Activated CD8-positive, alpha-beta T cell treated with anti-CD3 and anti-CD28 coated beads, Interleukin-2, amount 10 ng/mL, durations not matched to agents 7 days and 5 days (primary cell): ENCODE measurements at regions of chr3 and their contacts with region 1.

Region 1: GRCh38 chr3:138915503-138916498 is 31.1 kb downstream of the FOXL2 start:
- DNase-seq: peak; percentile 81
- ATAC-seq: peak; percentile 87
- H3K4me3 Mint-ChIP-seq: peak overlapping the region; percentile 71
- H3K27ac Mint-ChIP-seq: peak overlapping the region; percentile 74
- H3K4me1 Mint-ChIP-seq: peaks cover 5% of the 10 kb centered on the region
- H3K27me3 Mint-ChIP-seq: peaks cover 27% of the 10 kb centered on the region

Region 2: GRCh38 chr3:138417559-138417982 is 498.2 kb before region 1 on chr3:
- CTCF ChIA-PET with region 1: interaction called, 29 read pairs
- POLR2A ChIA-PET with region 1: no interaction called
- DNase-seq: peak; percentile 73
- ATAC-seq: peak; percentile 96
- H3K4me3 Mint-ChIP-seq: no peak overlapping the region
- H3K27ac Mint-ChIP-seq: no peak overlapping the region
- H3K4me1 Mint-ChIP-seq: peaks cover 2% of the 10 kb centered on the region
- H3K27me3 Mint-ChIP-seq: peaks cover 7% of the 10 kb centered on the region

Region 3: DNA sequence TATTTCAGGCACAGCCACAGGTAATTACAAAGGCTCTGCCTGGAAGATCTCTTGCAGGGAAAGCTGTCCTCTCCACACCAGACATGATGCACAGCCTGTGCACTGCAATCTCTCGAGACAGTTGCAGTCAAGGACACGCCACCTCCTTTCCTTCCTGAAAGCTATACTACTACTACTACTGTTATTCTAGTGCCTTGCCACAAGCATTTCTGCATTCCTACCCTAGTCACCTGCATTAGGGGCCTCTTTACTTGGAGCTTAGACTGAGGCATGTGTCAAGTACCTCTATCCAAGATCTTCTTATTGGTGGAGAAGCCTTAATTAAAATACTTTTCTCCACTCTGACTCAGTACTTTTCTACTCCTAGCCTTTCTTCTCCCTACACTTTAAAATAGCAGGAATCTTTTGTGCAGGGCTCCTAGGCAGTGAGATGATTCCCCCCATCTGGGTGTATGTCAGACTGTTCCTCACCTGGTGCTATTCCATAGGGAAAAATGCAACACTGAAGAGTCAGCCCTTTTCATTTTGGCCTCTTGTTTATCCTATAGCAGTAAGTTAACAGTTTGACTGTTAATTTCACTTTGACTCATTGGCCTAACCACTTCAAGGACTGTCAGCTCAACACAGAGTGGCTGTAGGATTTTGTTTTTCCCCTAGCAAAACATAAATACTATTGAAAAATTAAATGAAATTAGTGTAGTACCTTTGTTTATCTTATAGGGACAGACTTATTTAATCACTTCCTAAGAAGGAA is 402.5 kb before region 1 on chr3:
- CTCF ChIA-PET with region 1: interaction called, 19 read pairs
- POLR2A ChIA-PET with region 1: no interaction called
- DNase-seq: no peak
- ATAC-seq: peak; percentile 84
- H3K4me3 Mint-ChIP-seq: no peak overlapping the region
- H3K27ac Mint-ChIP-seq: peak overlapping the region; percentile 17
- H3K4me1 Mint-ChIP-seq: peaks cover 24% of the 10 kb centered on the region
- H3K27me3 Mint-ChIP-seq: no peaks in the 10 kb centered on the region

Region 4: DNA sequence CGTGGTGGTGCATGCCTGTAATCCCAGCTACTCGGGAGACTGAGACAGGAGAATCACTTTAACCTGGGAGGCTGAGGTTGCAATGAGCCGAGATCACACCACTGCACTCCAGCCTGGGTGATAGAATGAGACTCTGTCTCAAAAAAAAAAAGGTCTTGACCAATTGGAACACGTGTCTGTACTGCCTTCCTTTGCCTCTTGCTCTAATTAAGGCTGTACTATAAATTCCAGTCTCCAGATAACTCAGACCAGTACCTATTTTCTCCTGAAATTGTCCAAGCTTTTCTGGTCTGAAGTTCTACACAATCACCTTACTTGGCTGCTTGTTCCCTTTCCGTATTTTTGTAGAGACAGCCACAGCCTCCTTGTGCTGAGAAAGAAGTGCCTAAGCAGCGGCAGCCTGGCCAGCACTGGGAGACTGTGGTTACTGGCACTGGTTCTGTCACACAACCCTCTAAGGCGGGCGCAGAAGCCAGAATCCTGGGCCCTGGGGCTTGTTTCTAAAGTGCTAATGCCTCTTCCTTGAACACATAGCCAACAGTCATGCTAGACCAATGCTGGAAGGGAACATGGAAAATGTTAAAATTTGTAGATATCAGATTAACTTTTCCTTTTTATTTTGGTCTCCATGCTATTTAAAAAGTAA is 315.6 kb before region 1 on chr3:
- CTCF ChIA-PET with region 1: interaction called, 137 read pairs
- POLR2A ChIA-PET with region 1: interaction called, 3 read pairs
- DNase-seq: no peak
- ATAC-seq: no peak
- H3K4me3 Mint-ChIP-seq: no peak overlapping the region
- H3K27ac Mint-ChIP-seq: no peak overlapping the region
- H3K4me1 Mint-ChIP-seq: peaks cover 2% of the 10 kb centered on the region
- H3K27me3 Mint-ChIP-seq: no peaks in the 10 kb centered on the region

Region 5: DNA sequence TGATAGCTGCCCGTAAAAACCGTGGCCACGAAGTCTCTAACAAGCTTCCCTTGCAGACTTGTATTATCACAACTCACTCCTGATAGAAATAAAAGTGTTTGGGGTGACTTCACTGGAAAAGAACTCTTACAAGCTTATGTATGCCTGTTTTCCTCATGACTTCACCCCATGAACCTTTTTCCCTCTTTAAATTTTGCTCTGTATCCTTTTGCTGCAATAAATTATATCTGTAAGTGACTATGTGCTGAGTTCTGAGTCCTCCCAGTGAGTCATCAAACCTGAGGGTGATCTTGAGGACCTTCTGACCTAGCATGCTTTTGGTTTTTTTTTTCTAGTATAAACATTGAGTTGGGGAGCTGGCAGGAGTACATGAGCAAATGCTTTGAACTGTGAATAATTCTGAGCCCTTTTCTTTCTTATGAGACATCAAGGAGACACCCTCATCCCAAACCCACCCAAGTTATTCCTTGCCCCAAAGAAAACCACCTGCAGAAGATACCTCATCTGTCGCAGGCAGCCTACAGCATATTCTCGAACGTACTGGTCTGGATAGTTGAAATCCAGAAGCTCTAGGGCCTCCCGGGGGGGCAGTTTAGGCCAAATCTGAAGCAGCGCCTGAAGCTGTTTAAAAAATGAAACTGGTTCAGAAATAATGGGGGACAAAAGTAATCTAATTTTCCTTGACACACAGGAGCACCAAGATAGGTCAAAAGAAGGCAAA is 221.4 kb before region 1 on chr3:
- CTCF ChIA-PET with region 1: interaction called, 200 read pairs
- POLR2A ChIA-PET with region 1: interaction called, 4 read pairs
- DNase-seq: no peak
- ATAC-seq: no peak
- H3K4me3 Mint-ChIP-seq: no peak overlapping the region
- H3K27ac Mint-ChIP-seq: no peak overlapping the region
- H3K4me1 Mint-ChIP-seq: no peaks in the 10 kb centered on the region
- H3K27me3 Mint-ChIP-seq: no peaks in the 10 kb centered on the region

Region 6: GRCh38 chr3:138806376-138807080 is 109.3 kb before region 1 on chr3:
- CTCF ChIA-PET with region 1: interaction called, 10 read pairs
- POLR2A ChIA-PET with region 1: no interaction called
- DNase-seq: no peak
- ATAC-seq: no peak
- H3K4me3 Mint-ChIP-seq: no peak overlapping the region
- H3K27ac Mint-ChIP-seq: no peak overlapping the region
- H3K4me1 Mint-ChIP-seq: peaks cover 2% of the 10 kb centered on the region
- H3K27me3 Mint-ChIP-seq: no peaks in the 10 kb centered on the region

Region 7: GRCh38 chr3:138987181-138987580 is 71.4 kb after region 1 on chr3:
- CTCF ChIA-PET with region 1: no interaction called
- POLR2A ChIA-PET with region 1: no interaction called
- DNase-seq: no peak
- ATAC-seq: no peak
- H3K4me3 Mint-ChIP-seq: no peak overlapping the region
- H3K27ac Mint-ChIP-seq: no peak overlapping the region
- H3K4me1 Mint-ChIP-seq: no peaks in the 10 kb centered on the region
- H3K27me3 Mint-ChIP-seq: no peaks in the 10 kb centered on the region